Activated CD4-positive, alpha-beta memory T cell treated with anti-CD3 and anti-CD28 coated beads, Interleukin-2, amount 10 ng/mL, durations not matched to agents 7 days and 5 days (primary cell): ENCODE measurements at regions of chr1 and their contacts with region 1.

Region 1: GRCh38 chr1:109112652-109113285 is 1.1 kb upstream of the ELAPOR1 start:
- DNase-seq: peak; percentile 89
- H3K4me3 Mint-ChIP-seq: peak overlapping the region; percentile 74
- H3K27ac Mint-ChIP-seq: peak overlapping the region; percentile 55
- H3K4me1 Mint-ChIP-seq: peaks cover 37% of the 10 kb centered on the region
- H3K27me3 Mint-ChIP-seq: peaks cover 42% of the 10 kb centered on the region

Region 2: DNA sequence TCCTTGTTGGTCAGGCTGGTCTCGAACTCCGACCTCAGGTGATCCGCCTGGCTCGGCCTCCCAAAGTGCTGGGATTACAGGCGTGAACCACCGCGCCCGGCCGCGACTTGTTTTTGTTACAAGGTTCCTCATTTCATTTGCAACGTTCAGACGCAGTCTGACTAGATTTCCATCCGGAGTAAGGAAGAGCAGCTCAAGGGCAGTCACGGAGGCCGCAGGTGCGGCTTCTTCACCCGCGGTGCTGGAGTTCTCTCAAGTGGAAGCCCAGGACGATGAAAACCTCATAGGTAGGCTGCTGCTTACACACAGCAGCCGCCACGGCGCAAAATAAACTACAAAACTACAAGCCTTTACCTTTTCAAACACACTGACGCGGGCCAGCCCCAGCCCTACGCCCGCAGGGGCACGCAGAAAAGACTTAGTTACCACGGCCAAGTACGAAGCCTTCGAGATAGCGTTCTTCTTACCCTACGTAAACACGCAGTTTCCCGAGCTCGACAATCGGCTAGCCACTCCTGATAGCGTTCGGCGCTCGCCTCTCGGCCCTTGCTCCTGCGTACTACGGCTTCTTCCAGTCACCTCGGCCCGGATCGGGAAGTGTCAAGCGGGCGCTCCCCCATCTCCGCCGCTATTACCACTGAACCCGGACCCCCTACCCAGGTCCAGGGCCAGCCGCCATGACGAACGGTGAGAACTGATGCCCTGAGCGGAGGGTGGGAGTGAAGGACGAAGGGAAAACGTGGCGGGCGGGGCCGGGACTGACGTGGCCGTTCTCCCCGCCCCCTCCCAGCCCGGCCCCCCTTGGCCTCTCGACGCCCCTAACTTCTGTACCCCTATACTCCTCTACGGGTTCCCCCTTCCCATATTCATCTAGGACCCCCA is 22.3 kb before region 1 on chr1 and contains the start of gene TMEM167B:
- CTCF ChIA-PET with region 1: interaction called, 14 read pairs
- POLR2A ChIA-PET with region 1: interaction called, 13 read pairs
- DNase-seq: peak; percentile 91
- H3K4me3 Mint-ChIP-seq: peak within 1 kb of the TSS; percentile 85
- H3K27ac Mint-ChIP-seq: peak within 1 kb of the TSS; percentile 82
- H3K4me1 Mint-ChIP-seq: peaks cover 44% of the 10 kb centered on the region
- H3K27me3 Mint-ChIP-seq: no peaks in the 10 kb centered on the region
- total RNA-seq, gene TMEM167B: 29.6 to 31.8 TPM

Region 3: GRCh38 chr1:109133815-109134214 is 21.0 kb after region 1 on chr1:
- CTCF ChIA-PET with region 1: interaction called, 11 read pairs
- POLR2A ChIA-PET with region 1: interaction called, 3 read pairs
- DNase-seq: no peak
- H3K4me3 Mint-ChIP-seq: no peak overlapping the region
- H3K27ac Mint-ChIP-seq: no peak overlapping the region
- H3K4me1 Mint-ChIP-seq: peaks cover 6% of the 10 kb centered on the region
- H3K27me3 Mint-ChIP-seq: no peaks in the 10 kb centered on the region